Aorta (tissue), 5 donors: ENCODE measurements at regions of chr4 and their contacts with region 1.

Region 1: DNA sequence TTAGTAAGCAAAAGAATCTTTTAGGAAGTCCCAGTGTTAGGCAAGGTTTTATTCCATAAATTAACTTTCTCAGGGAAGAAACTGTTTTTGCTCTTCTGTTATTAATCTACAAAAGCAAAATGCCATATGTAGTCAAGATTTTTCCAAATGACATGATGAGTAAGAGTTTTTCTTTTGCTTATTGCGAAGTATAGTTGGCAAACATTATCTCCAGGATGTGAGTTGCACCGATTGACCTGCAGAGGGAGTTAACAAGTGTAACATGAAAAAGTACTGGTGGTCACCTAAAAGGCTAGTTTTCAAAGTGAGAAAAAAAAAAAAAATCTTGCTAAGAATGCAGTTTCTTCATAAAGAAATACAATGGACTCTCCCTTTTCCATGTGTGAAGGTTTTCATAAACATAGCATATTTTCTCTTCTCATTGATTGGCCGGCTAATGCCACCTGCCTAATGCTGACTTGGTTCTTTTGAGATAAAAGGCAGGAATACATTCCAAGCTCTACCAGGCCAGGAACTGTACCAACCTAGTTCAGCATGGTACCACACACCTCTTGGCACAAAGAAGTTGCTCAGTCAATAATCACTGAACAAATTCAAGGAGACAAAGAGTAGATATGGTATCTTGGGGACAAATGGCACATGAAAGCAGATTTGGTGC is 100.2 kb downstream of the LNX1 start:
- DNase-seq: no peak
- ATAC-seq: peak; percentile 77
- H3K4me3 ChIP-seq: no peak overlapping the region
- H3K27ac ChIP-seq: no peak overlapping the region
- H3K4me1 ChIP-seq: peaks cover 0 to 3% of the 10 kb centered on the region in 2 donors
- H3K27me3 ChIP-seq: no peaks in the 10 kb centered on the region

Region 2: GRCh38 chr4:54228056-54228527 is 737.0 kb after region 1 on chr4:
- intact Hi-C with region 1: loop called in 1 of 2 experiments (anchors 10 kb)
- DNase-seq: peak; percentile 84 to 93
- ATAC-seq: peak; percentile 75
- H3K4me3 ChIP-seq: peak overlapping the region; percentile 59 to 78
- H3K27ac ChIP-seq: peak overlapping the region in 1 of 2 donors; percentile 65
- H3K4me1 ChIP-seq: no peaks in the 10 kb centered on the region
- H3K27me3 ChIP-seq: no peaks in the 10 kb centered on the region